Esophagus squamous epithelium (tissue), 5 donors: ENCODE measurements at regions of chr20 and their contacts with region 1.

Region 1: GRCh38 chr20:22339091-22339881 is 245.1 kb downstream of the FOXA2 start:
- DNase-seq: no peak
- H3K4me3 ChIP-seq: no peak overlapping the region
- H3K27ac ChIP-seq: no peak overlapping the region
- H3K4me1 ChIP-seq: peaks cover 0 to 14% (median 5%) of the 10 kb centered on the region in 3 donors
- H3K27me3 ChIP-seq: peaks cover 0 to 35% (median 0%) of the 10 kb centered on the region in 4 donors
- CTCF ChIP-seq: peak; percentile 48 to 85 (median 77)
- POLR2A ChIP-seq: no peak

Region 2: DNA sequence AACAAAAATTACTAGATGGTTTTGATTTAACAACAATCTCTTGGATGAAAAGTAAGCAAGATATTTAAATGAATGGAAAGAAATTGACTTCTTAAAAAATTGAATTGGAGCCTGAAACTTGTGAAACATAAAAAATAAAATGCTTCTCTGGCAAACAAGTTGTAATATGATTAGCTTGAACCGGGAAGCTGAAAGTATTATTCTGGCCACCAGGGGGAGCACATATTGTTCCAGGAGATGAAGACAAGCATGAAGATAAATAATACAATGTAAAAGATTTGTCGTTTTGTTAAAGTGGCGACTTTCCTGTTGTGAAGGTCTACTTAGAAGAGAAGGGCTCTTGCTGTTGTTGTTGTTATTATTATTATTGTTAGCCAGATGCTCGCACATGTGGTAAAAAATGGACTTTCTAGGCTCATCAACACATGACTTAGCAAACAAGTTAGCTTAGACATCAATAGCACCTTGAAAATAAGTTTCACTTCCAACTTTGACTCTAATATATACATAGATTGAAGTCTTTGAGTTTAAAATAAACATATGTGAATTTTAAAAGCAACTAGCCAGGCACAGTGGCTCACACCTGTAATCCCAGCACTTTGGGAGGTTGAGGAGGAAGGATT is 619.6 kb before region 1 on chr20:
- intact Hi-C with region 1: no loop called
- DNase-seq: no peak
- H3K4me3 ChIP-seq: no peak overlapping the region
- H3K27ac ChIP-seq: no peak overlapping the region
- H3K4me1 ChIP-seq: no peaks in the 10 kb centered on the region
- H3K27me3 ChIP-seq: peaks cover 0 to 38% (median 2%) of the 10 kb centered on the region in 4 donors
- CTCF ChIP-seq: peak; percentile 48 to 79 (median 60)
- POLR2A ChIP-seq: no peak

Region 3: GRCh38 chr20:22586645-22587310 is 247.5 kb after region 1 on chr20:
- intact Hi-C with region 1: loop called (anchors 5 kb)
- DNase-seq: no peak
- H3K4me3 ChIP-seq: peak overlapping the region in 1 of 4 donors; percentile 37
- H3K27ac ChIP-seq: no peak overlapping the region
- H3K4me1 ChIP-seq: peaks cover 19 to 49% (median 27%) of the 10 kb centered on the region in 3 donors
- H3K27me3 ChIP-seq: peaks cover 10 to 100% (median 26%) of the 10 kb centered on the region in 4 donors
- CTCF ChIP-seq: peak; percentile 26 to 67 (median 48)
- POLR2A ChIP-seq: no peak

Region 4: GRCh38 chr20:22684072-22684762 is 344.9 kb after region 1 on chr20:
- intact Hi-C with region 1: loop called (anchors 5 kb)
- DNase-seq: no peak
- H3K4me3 ChIP-seq: no peak overlapping the region
- H3K27ac ChIP-seq: no peak overlapping the region
- H3K4me1 ChIP-seq: peaks cover 0 to 10% (median 0%) of the 10 kb centered on the region in 3 donors
- H3K27me3 ChIP-seq: peaks cover 0 to 29% (median 0%) of the 10 kb centered on the region in 4 donors
- CTCF ChIP-seq: peak; percentile 29 to 83 (median 76)
- POLR2A ChIP-seq: no peak

Region 5: DNA sequence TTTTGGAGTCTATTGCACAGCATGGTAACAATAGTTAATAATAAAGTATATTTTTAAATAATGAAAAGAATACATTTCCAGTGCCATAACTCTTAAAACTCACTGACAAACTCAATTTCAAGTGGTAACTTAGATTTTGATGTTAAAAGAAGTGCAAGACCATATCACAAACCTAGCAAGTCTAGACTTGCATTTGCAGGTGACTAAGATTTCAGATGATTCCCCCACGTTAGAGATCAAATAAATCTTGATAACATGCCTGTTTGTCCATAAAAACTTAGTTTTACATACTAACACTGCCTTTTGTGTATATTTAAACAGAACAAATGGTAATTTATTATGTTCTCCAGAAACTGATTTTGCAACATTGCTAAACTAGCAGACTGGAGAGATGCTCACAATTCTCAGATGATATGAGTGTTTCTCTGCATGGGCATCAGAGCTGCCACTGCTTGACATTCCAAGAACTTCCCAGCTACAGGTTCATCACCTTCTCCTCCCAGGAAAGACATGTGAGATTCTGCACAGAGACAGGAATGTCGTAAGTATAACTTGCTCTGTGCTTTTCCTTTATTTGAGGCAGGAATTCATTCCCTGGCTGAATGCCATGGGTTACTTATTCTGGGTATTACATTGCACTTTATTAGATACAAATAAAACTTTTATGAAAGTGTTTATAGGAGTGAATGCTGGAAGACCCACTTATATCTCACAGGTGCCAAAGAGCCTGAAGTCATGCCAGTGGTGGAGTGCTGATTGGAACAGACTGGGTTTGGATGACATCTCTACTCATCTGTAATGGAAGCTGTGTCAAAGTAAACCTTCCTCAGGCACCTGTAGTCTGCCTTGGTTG is 405.3 kb after region 1 on chr20:
- intact Hi-C with region 1: no loop called
- DNase-seq: no peak
- H3K4me3 ChIP-seq: no peak overlapping the region
- H3K27ac ChIP-seq: peak overlapping the region in 2 of 4 donors; percentile 29 to 59
- H3K4me1 ChIP-seq: peaks cover 0 to 29% (median 20%) of the 10 kb centered on the region in 3 donors
- H3K27me3 ChIP-seq: no peaks in the 10 kb centered on the region
- CTCF ChIP-seq: no peak
- POLR2A ChIP-seq: no peak